ENCODE measurements at regions of chr1 and their contacts with region 1.

Region 1: DNA sequence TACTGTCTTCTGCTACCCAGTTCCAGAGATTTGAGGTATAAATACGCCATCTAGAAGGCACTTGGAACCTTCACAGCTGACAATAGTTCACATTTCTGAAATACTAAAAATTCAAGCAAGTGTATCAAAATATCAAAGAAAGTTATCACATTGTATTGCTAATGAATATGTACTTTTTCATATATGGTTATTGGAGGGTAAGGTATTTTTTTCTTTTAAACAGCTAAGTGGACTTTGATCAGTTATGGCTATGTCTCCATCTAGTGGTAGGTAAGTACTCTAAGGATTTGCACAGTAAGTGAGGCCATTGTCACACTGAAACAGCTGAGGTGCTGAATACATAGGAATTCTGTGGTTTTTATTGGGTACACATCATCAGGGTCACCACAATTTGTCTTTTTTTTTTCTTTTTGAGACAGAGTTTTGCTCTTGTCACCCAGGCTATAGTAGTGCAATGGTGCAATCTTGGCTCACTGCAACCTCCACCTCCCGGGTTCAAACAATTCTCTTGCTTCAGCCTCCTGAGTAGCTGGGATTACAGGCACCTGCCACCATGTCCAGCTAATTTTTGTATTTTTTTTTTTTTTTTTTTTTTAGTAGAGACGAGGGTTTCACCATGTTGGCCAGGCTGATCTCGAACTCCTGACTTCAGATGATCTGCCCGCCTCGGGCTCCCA is 49.1 kb upstream of the CR2 start:
- DNase-seq: peak; percentile 28
- H3K4me3 ChIP-seq: no peak overlapping the region
- CTCF ChIP-seq: peak; percentile 70

Region 2: GRCh38 chr1:207077470-207078377 is 327.3 kb before region 1 on chr1:
- CTCF ChIA-PET with region 1: interaction called, 65 read pairs
- POLR2A ChIA-PET with region 1: no interaction called
- DNase-seq: peak; percentile 23
- H3K4me3 ChIP-seq: no peak overlapping the region
- CTCF ChIP-seq: peak; percentile 86

Region 3: DNA sequence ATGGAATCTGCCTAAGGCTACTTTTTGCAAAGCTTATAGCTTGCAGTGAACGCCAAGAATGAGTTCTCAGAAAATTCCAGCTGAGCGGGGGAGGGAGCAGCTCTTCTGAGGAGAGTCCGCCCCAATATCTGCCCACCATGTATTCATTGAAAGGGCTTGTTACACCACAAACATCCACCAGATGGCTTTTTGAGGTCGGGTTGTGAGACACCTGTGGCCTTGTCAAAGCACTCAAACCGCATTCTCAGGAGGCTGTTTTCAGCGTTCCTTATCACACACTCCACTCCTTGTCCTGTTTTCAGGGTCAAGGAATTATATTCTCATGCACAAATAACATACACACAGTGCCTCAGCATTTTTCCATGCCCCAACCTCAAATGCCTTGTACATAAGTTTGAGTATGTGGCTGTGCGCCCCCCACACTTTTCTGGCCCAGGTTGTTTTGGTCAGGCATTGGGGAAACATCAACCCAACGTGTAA is 320.2 kb before region 1 on chr1:
- CTCF ChIA-PET with region 1: interaction called, 65 read pairs
- POLR2A ChIA-PET with region 1: no interaction called
- DNase-seq: no peak
- H3K4me3 ChIP-seq: no peak overlapping the region
- CTCF ChIP-seq: peak; percentile 44

Region 4: DNA sequence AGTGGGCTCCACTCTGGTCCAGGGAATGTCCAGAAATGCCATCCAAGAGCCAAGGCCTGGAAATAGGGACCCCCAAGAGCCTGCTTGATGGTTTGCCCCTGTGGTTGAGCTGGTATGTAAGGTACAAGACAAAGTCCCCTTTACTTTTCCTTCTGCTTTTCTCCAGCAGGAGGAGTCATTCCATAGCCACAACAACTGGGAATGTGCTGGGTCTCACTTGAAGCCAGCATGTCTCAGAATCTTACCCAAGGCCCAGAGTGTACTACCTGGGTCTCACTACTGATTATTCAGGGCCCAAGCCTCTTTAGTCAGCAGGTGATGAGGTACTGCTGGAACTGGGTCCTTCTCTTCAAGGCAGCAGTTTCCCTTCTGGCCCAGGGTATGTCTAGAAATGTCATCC is 145.6 kb before region 1 on chr1:
- CTCF ChIA-PET with region 1: interaction called, 91 read pairs
- POLR2A ChIA-PET with region 1: no interaction called
- DNase-seq: no peak
- H3K4me3 ChIP-seq: no peak overlapping the region
- CTCF ChIP-seq: peak; percentile 45

Region 5: GRCh38 chr1:207321079-207321789 is 83.8 kb before region 1 on chr1 and contains the start of gene CD55:
- CTCF ChIA-PET with region 1: interaction called, 11 read pairs
- POLR2A ChIA-PET with region 1: no interaction called
- DNase-seq: no peak
- H3K4me3 ChIP-seq: peak within 1 kb of the TSS; percentile 69
- CTCF ChIP-seq: peak; percentile 27

Region 6: DNA sequence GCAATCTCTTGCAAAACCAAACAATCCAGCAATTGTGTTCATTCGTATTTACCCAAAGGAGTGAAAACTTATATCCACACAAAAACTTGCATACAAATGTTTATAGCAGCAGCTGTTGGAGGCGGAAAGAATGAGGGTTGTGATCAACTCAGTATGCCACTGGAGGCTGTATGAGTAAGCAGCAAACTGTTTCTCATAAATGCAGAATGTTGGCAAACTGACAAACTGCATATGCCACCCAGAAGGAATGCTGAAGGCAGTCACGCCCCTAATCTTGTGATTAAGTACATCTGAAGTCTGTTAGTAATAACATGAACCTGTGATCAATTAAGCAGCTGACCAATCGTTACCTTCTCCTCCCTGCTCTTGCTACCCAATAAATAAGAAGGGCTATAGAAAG is 11.4 kb before region 1 on chr1:
- CTCF ChIA-PET with region 1: interaction called, 16 read pairs
- POLR2A ChIA-PET with region 1: no interaction called
- DNase-seq: peak; percentile 84
- H3K4me3 ChIP-seq: no peak overlapping the region
- CTCF ChIP-seq: no peak

Region 7: DNA sequence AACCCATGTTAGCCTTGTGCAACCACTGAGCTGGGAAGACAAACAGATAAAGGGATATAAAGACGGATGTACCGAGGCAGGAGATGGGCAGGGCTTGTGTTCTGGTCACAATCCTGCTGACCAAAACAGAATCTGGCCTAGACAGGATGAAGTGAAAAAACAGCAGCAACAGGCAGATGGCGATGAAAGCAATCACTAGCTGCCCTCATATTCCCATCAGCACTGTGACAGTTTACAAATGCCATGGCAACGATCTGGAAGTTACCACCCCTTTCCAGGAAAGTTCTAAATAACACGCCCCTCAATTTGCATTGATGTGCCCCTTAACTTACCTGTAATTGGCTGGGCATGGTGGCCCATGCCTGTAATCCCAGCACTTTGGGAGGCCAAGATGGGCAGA is 306.3 kb after region 1 on chr1:
- CTCF ChIA-PET with region 1: no interaction called
- POLR2A ChIA-PET with region 1: no interaction called
- DNase-seq: no peak
- H3K4me3 ChIP-seq: no peak overlapping the region
- CTCF ChIP-seq: no peak